Ascending aorta (tissue), 2 donors: ENCODE measurements at regions of chr10 and their contacts with region 1.

Region 1: DNA sequence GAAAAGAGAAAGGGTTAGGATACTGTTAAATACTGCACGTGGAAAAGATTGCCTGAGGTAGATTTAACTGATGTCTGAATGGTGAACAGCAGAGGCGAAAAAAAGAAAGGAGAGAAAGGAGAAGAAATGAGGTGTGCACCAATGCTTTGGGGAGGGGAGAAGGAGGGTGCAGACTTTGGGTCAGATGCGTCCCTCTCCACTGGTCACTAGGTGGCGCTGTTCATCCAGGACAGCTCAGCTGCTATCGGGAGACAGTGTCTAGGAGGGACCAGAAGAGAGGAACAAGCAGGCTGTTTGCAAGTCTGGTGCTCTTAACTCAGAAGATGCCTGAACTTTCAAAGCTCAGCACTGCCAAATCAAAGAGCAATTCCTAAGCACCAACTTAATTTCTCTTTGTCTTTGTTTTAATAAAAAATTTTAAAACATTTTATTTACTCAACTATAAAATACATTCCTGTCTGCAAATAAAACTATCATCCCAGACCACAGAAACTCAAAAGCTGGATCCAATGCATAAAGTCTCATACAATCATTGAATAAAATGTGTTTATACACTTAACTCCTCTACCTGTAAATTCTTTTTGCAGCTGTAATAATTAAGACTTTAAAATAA is 83.9 kb upstream of the PDLIM1 start:
- DNase-seq: peak in 1 of 2 donors; percentile 86
- H3K4me3 ChIP-seq: no peak overlapping the region
- H3K27ac ChIP-seq: peak overlapping the region; percentile 74 to 89
- H3K4me1 ChIP-seq: peaks cover 8 to 54% of the 10 kb centered on the region in 2 donors
- H3K27me3 ChIP-seq: no peaks in the 10 kb centered on the region
- CTCF ChIP-seq: peak; percentile 79 to 85 (median 85)

Region 2: DNA sequence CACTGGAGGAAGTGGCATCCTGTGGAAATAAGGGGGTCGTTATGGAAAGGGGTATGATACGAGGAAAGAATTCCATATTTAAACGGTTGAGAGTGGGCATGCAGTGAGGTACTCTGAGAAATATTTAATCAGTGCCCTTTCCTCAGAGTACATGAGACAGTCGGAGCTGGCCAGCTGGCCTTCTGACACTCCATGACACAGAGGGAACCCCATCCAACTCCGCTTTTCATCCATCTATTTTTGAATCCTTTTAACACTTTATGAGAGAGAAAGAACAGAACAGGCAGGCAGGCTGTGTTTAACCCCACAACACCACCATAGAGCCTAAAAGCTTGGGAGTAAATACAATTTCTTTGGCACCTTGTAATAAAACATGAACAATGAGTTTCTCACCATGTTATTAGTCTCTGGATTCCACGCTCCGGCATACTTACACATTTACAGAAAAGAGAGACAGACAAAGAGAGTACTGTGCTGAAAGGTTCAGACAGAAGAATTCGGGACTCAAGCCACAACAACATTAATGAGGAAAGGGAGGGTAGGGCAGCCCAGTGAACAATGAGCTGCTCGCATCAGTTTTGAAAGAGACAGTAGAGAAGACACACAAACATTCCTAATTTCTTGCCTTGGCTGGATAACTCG is 40.3 kb after region 1 on chr10:
- intact Hi-C with region 1: loop called (anchors 5 kb)
- DNase-seq: peak in 1 of 2 donors; percentile 86
- H3K4me3 ChIP-seq: peak overlapping the region; percentile 19 to 30
- H3K27ac ChIP-seq: peak overlapping the region; percentile 89 to 95
- H3K4me1 ChIP-seq: peaks cover 22 to 97% of the 10 kb centered on the region in 2 donors
- H3K27me3 ChIP-seq: no peaks in the 10 kb centered on the region
- CTCF ChIP-seq: no peak

Region 3: DNA sequence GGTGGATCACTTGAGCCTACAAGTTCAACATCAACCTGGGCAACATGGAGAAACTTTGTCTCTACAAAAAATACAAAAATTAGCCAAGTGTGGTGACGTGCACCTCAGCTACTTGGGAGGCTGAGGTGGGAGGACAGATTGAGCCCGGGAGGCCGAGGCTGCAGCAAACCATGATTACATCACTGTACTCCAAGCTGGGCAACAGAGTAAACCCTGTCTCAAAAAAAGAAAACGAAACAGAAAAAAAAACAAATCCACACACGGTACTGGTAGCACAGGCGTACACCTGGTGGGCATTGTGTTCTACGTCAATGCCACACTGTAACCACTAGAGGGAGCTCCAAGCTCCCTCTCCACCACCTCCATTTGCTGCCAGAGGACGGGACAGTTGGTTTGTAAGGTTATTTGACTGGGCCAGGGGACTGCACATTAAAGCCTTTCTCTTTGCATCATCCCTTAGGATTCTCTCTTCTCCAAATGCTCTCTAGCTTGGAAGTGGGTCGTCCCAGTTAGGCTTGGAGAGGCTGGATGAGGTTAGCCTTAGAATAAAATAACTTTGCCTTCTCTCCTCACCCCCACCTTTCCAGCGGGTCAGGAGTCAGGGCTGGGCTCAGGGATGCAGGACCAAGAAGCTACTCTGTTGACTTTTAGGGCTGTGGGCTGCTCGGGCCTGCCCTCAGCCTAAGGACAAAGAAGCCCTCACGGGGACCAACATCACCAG is 55.7 kb after region 1 on chr10:
- intact Hi-C with region 1: loop called (anchors 1 kb)
- DNase-seq: peak in 1 of 2 donors; percentile 70
- H3K4me3 ChIP-seq: no peak overlapping the region
- H3K27ac ChIP-seq: peak overlapping the region; percentile 93 to 96
- H3K4me1 ChIP-seq: peaks cover 19 to 80% of the 10 kb centered on the region in 2 donors
- H3K27me3 ChIP-seq: no peaks in the 10 kb centered on the region
- CTCF ChIP-seq: peak; percentile 88 to 91 (median 90)

Region 4: GRCh38 chr10:95601116-95601719 is 226.5 kb after region 1 on chr10:
- intact Hi-C with region 1: loop called (anchors 1 kb)
- DNase-seq: peak in 1 of 2 donors; percentile 92
- H3K4me3 ChIP-seq: no peak overlapping the region
- H3K27ac ChIP-seq: peak overlapping the region; percentile 10 to 23
- H3K4me1 ChIP-seq: peaks cover 6 to 25% of the 10 kb centered on the region in 2 donors
- H3K27me3 ChIP-seq: no peaks in the 10 kb centered on the region
- CTCF ChIP-seq: peak; percentile 89 to 93 (median 89)